Colonic mucosa (tissue), 4 donors: ENCODE measurements at regions of chr15 and their contacts with region 1.

Region 1: DNA sequence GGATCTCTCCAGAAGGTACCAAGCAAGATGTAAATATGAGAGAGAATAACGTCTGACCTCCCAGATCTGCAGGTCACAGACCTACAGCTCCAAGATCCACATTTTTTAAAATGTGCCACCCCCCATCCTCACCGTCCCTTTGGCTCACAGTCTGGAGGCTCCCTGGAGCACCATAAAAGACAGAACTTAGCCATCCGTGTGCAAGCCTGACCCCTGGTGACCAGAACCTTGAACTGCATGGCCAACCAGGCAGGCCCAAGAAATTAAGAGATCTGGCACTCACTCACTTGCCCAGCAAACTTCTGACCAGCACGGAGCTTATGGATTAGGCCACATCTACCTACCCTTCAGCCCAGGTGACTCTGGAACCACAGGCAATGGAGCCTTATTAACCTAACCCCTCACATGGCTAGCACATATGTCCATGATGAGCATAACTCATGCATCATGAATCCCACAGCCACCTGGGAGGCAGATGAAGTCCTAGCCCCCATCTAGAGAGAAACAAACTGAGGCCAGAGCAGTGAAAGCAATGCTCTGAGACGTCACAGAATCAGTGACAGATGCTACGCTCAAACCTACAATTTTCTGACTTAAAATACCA is 275.3 kb downstream of the UACA start:
- DNase-seq: peak; percentile 75
- H3K4me3 ChIP-seq: no peak overlapping the region
- H3K27ac ChIP-seq: no peak overlapping the region
- H3K4me1 ChIP-seq: no peaks in the 10 kb centered on the region
- H3K27me3 ChIP-seq: no peaks in the 10 kb centered on the region
- CTCF ChIP-seq: peak; percentile 97

Region 2: DNA sequence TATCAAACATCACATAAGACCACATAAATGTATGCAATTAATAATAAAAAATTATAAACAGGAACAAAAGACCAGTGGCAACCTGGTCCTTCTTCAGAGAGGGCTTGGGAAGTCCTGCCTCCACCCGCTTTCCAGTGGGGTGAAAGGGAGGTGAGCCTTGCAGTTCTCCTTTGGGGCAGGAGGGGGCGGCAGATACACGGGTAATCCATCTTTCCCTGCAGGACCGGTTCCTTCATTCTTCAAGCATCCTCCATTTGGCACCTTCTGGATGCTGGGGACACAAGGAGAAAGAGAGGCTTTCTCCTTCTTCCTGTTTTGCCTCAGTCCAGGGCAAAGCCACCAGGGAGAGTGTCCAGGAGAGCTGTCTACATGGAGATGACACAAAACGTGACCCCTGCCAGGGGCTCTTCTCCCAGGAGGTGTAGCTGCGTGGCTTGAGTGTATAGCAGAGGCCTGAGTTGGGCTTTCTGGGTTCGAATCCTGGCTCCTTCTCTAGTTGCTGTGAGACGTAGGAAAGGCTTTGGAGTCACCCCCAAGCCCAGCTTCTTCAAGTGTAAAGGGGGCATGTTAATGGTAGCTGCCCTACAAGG is 1012.2 kb before region 1 on chr15:
- intact Hi-C with region 1: loop called (anchors 5 kb)
- DNase-seq: peak; percentile 84
- H3K4me3 ChIP-seq: no peak overlapping the region
- H3K27ac ChIP-seq: no peak overlapping the region
- H3K4me1 ChIP-seq: no peaks in the 10 kb centered on the region
- H3K27me3 ChIP-seq: no peaks in the 10 kb centered on the region
- CTCF ChIP-seq: peak; percentile 98

Region 3: DNA sequence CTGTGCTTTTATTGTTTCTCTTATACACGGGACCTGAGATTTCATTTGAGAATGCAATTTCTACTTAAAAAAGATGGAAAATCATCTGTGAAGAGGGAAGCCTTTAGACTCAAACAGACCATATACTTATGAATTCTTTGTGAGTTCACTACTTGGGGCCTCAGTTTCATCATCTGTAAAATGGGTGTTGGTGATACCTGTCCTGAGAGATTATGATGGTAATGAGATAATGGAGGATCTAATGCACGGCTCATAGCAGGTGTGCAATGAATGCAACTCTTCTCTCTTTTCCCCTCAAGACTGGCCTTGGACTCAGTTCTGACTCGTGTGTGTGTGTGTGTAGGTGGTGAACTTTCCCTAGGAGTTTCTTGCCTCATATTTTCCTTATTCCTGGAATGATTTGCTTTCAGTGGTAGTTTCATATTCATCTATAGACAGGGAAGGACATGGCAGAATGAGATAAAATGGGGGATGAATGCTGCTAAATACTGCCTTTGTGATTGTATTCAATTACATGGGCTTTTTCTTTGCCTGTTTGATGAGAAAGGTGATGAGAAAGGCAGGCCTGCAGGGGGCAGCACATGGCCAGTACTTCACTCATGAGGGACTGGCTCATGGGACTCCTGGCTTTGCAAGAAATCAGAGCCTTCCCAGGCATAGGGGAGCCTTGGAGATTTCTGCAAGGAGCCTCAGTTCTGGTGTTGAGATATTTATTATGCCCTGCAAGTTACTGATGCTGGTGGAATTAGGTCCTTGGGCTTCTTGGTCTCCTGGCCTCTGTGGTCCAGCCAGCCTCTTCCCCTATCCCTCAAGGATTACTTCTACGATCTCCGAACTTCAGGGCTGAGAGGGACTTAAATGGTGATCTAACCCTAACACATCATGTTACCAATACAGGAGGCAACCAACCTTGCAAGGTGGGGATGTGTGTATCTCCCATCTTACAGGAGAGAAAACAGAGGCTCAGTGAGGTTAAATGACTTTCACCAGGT is 964.8 kb before region 1 on chr15:
- intact Hi-C with region 1: loop called (anchors 5 kb)
- DNase-seq: peak; percentile 92
- H3K4me3 ChIP-seq: no peak overlapping the region
- H3K27ac ChIP-seq: no peak overlapping the region
- H3K4me1 ChIP-seq: peaks cover 10% of the 10 kb centered on the region
- H3K27me3 ChIP-seq: no peaks in the 10 kb centered on the region
- CTCF ChIP-seq: peak; percentile 64

Region 4: DNA sequence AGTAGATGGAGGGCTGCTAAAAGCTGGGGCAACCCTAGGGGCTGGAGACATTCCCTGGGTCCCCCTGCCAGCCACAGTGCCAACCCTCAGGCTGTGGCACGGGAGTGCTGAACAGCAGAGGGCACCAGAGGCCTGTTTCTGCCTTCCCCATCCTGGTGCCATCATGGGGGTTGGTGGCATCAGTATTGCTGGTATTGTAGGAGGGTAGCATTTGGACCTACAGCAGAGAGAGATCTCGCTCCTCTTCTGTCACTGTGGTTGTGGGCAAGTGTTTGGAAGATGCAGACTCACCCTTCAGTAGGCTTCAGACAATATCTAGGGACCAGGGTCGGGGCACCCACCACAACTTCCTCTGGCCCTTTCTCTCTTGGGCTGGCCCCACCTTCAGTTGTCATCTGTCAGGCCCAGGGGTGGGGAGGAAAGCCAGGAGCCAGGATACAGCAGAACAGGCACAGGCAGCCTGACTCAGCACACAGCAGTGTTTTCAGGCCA is 912.0 kb before region 1 on chr15:
- intact Hi-C with region 1: loop called (anchors 10 kb)
- DNase-seq: peak; percentile 81
- H3K4me3 ChIP-seq: no peak overlapping the region
- H3K27ac ChIP-seq: no peak overlapping the region
- H3K4me1 ChIP-seq: peaks cover 12% of the 10 kb centered on the region
- H3K27me3 ChIP-seq: no peaks in the 10 kb centered on the region
- CTCF ChIP-seq: peak; percentile 85

Region 5: GRCh38 chr15:70014860-70015490 is 473.1 kb before region 1 on chr15:
- intact Hi-C with region 1: no loop called
- DNase-seq: no peak
- H3K4me3 ChIP-seq: no peak overlapping the region
- H3K27ac ChIP-seq: no peak overlapping the region
- H3K4me1 ChIP-seq: no peaks in the 10 kb centered on the region
- H3K27me3 ChIP-seq: no peaks in the 10 kb centered on the region
- CTCF ChIP-seq: no peak